H1 (cell line): ENCODE measurements at regions of chr17 and their contacts with region 1.

Region 1: GRCh38 chr17:57861000-57861789 is 11.4 kb upstream of the MRPS23 start:
- DNase-seq: peak in 1 of 2 experiments; percentile 64
- H3K4me3 ChIP-seq: peak overlapping the region; percentile 30 to 66 (median 46)
- H3K27ac ChIP-seq: no peak overlapping the region
- H3K4me1 ChIP-seq: peaks cover 0 to 16% (median 14%) of the 10 kb centered on the region in 4 experiments; a peak in 5 of 7 replicates
- H3K27me3 ChIP-seq: peaks cover 0 to 30% (median 26%) of the 10 kb centered on the region in 4 experiments; a peak in 5 of 7 replicates
- CTCF ChIP-seq: no peak
- EP300 ChIP-seq: no peak
- POLR2A ChIP-seq: no peak
- RAD21 ChIP-seq: no peak

Region 2: GRCh38 chr17:57732062-57732461 is 129.1 kb before region 1 on chr17:
- CTCF ChIA-PET with region 1: no interaction called
- POLR2A ChIA-PET with region 1: no interaction called
- DNase-seq: no peak
- H3K4me3 ChIP-seq: no peak overlapping the region
- H3K27ac ChIP-seq: no peak overlapping the region
- H3K4me1 ChIP-seq: no peaks in the 10 kb centered on the region; a peak in 1 of 7 replicates
- H3K27me3 ChIP-seq: no peaks in the 10 kb centered on the region
- CTCF ChIP-seq: no peak
- EP300 ChIP-seq: no peak
- POLR2A ChIP-seq: no peak
- RAD21 ChIP-seq: no peak

Region 3: DNA sequence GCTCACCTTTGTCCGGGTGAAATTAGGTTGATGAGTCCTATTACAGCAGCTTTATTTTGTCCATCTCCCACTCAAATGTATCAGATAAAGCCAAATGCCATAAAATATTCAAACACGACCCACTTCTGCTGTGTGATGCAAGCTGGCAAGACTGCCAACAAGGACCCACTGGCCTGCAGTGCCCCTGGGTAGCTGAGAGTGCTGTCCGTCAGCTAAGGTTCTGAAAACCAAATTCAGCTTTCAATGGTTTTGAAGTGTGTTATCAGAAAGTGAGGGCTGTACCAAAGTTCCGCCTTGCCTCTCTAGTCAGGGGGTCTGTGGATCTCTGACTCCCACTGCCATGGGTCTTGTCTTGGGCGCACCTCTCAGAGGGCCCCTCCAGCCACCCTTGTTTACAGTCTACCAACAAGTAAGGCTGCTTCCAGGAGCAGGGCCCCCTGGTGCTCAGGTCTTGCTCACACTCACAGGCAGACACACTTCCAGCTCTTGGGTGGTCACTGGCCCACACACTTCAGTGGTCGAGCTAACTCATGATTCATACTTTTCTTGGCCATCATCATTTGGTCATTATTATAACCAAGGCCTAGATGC is 105.6 kb before region 1 on chr17:
- CTCF ChIA-PET with region 1: no interaction called
- POLR2A ChIA-PET with region 1: no interaction called
- DNase-seq: no peak
- H3K4me3 ChIP-seq: no peak overlapping the region
- H3K27ac ChIP-seq: no peak overlapping the region
- H3K4me1 ChIP-seq: peaks cover 0 to 2% (median 0%) of the 10 kb centered on the region in 4 experiments; a peak in 3 of 7 replicates
- H3K27me3 ChIP-seq: no peaks in the 10 kb centered on the region
- CTCF ChIP-seq: no peak
- EP300 ChIP-seq: no peak
- POLR2A ChIP-seq: no peak
- RAD21 ChIP-seq: no peak

Region 4: DNA sequence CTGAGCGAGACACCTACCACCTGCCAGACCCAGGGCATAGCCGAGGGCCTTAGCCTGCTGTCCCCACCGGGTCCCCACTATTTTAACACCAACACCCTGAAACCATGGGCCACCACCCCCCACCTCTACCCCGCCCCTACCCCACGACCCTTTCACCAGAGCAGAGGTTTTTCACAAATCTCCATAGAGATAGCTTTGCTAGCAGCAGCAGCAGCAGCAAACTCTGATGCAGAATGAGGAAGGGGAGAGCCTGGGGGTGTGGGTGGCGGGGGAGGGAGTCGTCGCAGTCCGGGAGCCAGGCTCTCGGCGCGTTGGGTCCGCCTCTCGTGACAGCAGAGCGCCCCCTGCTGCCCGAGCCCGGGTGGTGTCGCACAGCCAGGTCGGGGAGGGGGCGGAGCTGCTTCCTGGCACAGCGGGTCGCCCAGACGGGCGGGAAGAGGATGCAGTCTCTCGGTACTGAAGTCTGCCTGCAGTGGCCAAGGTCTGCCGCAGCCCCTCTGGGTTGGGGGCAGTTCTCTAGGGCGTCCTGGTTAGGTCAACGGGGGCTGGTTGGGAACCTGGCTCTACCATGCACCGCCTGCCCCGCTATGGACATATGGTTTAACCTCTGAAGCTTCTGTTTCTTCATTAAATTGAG is 78.0 kb before region 1 on chr17:
- CTCF ChIA-PET with region 1: no interaction called
- POLR2A ChIA-PET with region 1: no interaction called
- DNase-seq: peak; percentile 70 to 99
- H3K4me3 ChIP-seq: peak overlapping the region in 1 of 4 experiments; percentile 45; a peak in 2 of 8 replicates
- H3K27ac ChIP-seq: no peak overlapping the region
- H3K4me1 ChIP-seq: peaks cover 5 to 12% (median 8%) of the 10 kb centered on the region in 4 experiments; a peak in 6 of 7 replicates
- H3K27me3 ChIP-seq: peaks cover 0 to 13% (median 7%) of the 10 kb centered on the region in 4 experiments; a peak in 6 of 7 replicates
- CTCF ChIP-seq: peak; percentile 88 to 94 (median 94)
- EP300 ChIP-seq: peak; percentile 33 to 63; a peak in 2 of 3 replicates
- POLR2A ChIP-seq: no peak
- RAD21 ChIP-seq: peak; percentile 81 to 83

Region 5: DNA sequence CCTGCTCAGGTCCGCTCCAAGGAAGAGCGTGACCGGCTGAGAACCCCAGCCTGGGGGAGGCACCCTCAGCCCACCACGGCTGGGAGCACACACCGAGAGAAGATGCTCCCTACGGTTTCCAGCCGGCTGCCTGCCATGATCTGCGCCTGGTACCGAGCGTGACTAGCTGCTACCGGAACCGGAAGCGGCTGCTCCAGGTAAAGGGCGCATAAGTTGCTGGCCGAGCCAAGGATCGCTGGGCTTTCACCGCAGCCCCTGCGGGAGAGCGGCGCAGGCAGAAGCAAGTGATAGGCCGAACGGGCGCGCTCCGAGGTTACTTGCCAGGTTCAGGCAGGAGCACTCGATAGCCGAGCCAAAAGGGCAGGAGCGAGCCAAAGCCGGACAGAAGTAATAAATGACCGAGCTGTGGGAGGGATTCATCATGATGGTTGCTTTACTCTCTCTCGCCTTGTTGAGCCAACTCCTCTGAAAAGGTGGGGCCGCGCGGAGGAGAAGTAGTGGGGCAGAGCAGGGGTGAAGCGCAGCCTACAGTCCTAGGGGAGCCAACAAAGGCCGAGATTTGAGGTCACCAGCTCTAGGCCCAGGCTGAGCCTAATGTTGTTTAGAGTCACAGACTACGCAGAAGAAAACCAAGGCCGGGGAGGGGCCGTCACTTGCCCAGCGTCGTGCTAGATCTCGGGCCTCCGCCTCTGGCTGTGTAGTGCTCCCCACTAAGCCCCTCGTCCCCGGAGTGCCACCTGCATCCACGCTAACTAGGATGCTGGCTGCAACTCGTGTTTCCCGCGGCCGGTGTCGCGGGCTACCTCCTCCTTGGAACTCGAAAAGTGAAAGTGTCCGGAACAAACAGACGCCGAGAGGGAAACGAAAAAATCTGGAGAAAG is 11.1 kb before region 1 on chr17 and contains the start of gene MRPS23:
- CTCF ChIA-PET with region 1: interaction called, 117 read pairs
- POLR2A ChIA-PET with region 1: interaction called, 3 read pairs
- DNase-seq: peak; percentile 90 to 96
- H3K4me3 ChIP-seq: peak within 1 kb of the TSS; percentile 89 to 98 (median 94)
- H3K27ac ChIP-seq: peak within 1 kb of the TSS; percentile 63
- H3K4me1 ChIP-seq: peaks cover 0 to 7% (median 3%) of the 10 kb centered on the region in 4 experiments; a peak in 3 of 7 replicates
- H3K27me3 ChIP-seq: no peaks in the 10 kb centered on the region
- CTCF ChIP-seq: no peak
- EP300 ChIP-seq: peak in 1 of 2 experiments; percentile 92; a peak in 1 of 3 replicates
- POLR2A ChIP-seq: peak in 1 of 2 experiments; percentile 68; a peak in 2 of 3 replicates
- RAD21 ChIP-seq: no peak
- total RNA-seq, gene MRPS23: 60.4 and 73.4 TPM in 2 replicates

Region 6: GRCh38 chr17:57892146-57892828 is 31.1 kb after region 1 on chr17:
- CTCF ChIA-PET with region 1: interaction called, 205 read pairs
- POLR2A ChIA-PET with region 1: interaction called, 3 read pairs
- DNase-seq: peak in 1 of 2 experiments; percentile 99
- H3K4me3 ChIP-seq: peak overlapping the region in 1 of 4 experiments; percentile 1; a peak in 1 of 8 replicates
- H3K27ac ChIP-seq: peak overlapping the region; percentile 54; the same call in 1 of the 2 replicates
- H3K4me1 ChIP-seq: peaks cover 8 to 11% (median 11%) of the 10 kb centered on the region in 4 experiments
- H3K27me3 ChIP-seq: no peaks in the 10 kb centered on the region
- CTCF ChIP-seq: peak; percentile 96 to 100 (median 100)
- EP300 ChIP-seq: peak in 1 of 2 experiments; percentile 71; a peak in 1 of 3 replicates
- POLR2A ChIP-seq: no peak
- RAD21 ChIP-seq: peak; percentile 89 to 94

Region 7: GRCh38 chr17:57916925-57917858 is 56.0 kb after region 1 on chr17:
- CTCF ChIA-PET with region 1: interaction called, 22 read pairs
- POLR2A ChIA-PET with region 1: interaction called, 5 read pairs
- DNase-seq: no peak
- H3K4me3 ChIP-seq: no peak overlapping the region
- H3K27ac ChIP-seq: peak overlapping the region; percentile 68; the same call in 1 of the 2 replicates
- H3K4me1 ChIP-seq: peaks cover 5 to 21% (median 14%) of the 10 kb centered on the region in 4 experiments; a peak in 5 of 7 replicates
- H3K27me3 ChIP-seq: no peaks in the 10 kb centered on the region
- CTCF ChIP-seq: peak in 1 of 3 experiments; percentile 2; a peak in 1 of 4 replicates
- EP300 ChIP-seq: no peak
- POLR2A ChIP-seq: no peak
- RAD21 ChIP-seq: peak in 1 of 2 experiments; percentile 20; a peak in 1 of 4 replicates

Region 8: DNA sequence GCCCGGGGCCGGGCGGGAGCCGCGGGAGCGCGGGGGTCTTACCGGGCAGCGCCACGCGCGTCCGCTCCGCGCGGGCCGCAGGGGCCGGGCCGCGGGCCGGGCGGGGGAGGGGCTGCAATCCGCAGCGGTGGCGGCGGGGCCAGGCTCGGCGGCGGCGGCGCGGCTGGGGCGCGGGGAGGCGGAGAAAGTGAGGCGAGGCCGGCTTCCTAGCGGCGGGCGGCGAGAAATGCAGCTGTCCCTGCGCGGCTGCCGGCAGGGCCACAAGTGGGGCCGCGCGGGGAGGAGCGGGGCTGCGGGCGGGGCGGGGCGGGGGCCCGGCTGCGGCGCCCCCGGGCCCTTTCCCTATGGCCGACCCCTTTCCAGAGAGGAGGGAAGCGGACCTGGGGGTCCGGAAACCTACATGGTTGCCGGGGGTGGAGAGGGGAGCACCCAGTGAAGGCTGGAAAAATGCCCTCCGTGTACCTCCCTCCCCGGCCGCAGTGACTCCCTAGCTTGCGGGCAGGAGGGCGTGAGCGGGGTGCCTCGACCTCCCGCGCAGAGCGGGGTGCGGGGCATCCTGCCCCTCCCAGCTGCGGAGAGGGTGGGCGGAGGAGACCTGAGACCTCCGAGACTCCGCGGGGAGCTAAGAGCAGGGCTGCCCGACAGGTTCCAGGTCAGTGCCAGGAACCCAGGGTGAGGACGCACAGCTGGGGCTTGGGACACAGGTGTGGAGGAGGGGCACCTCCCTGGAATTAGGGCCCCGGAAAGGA is 94.2 kb after region 1 on chr17 and contains the start of gene CUEDC1:
- CTCF ChIA-PET with region 1: interaction called, 162 read pairs
- POLR2A ChIA-PET with region 1: interaction called, 15 read pairs
- DNase-seq: peak in 1 of 2 experiments; percentile 82
- H3K4me3 ChIP-seq: peak within 1 kb of the TSS; percentile 32 to 86 (median 66)
- H3K27ac ChIP-seq: no peak within 1 kb of the TSS
- H3K4me1 ChIP-seq: peaks cover 12 to 23% (median 14%) of the 10 kb centered on the region in 4 experiments
- H3K27me3 ChIP-seq: peaks cover 0 to 30% (median 20%) of the 10 kb centered on the region in 4 experiments; a peak in 6 of 7 replicates
- CTCF ChIP-seq: peak; percentile 16 to 63 (median 37)
- EP300 ChIP-seq: no peak
- POLR2A ChIP-seq: no peak
- RAD21 ChIP-seq: peak in 1 of 2 experiments; percentile 23; a peak in 2 of 4 replicates
- total RNA-seq, gene CUEDC1: 7.8 and 10.7 TPM in 2 replicates

Region 9: GRCh38 chr17:57987580-57988421 is 126.6 kb after region 1 on chr17 and contains the start of gene VEZF1:
- CTCF ChIA-PET with region 1: interaction called, 384 read pairs
- POLR2A ChIA-PET with region 1: interaction called, 672 read pairs
- DNase-seq: peak in 1 of 2 experiments; percentile 83
- H3K4me3 ChIP-seq: peak within 1 kb of the TSS; percentile 73 to 95 (median 86)
- H3K27ac ChIP-seq: peak within 1 kb of the TSS; percentile 89
- H3K4me1 ChIP-seq: peaks cover 0 to 2% (median 0%) of the 10 kb centered on the region in 4 experiments; a peak in 3 of 7 replicates
- H3K27me3 ChIP-seq: no peaks in the 10 kb centered on the region
- CTCF ChIP-seq: no peak
- EP300 ChIP-seq: 0 out of 3 replicates have a peak, but pooled peaks of 1 of the 2 experiments have one; percentile 22
- POLR2A ChIP-seq: no peak; a peak in 1 of 3 replicates
- RAD21 ChIP-seq: no peak
- total RNA-seq, gene VEZF1: 56.7 and 61.9 TPM in 2 replicates

Region 10: DNA sequence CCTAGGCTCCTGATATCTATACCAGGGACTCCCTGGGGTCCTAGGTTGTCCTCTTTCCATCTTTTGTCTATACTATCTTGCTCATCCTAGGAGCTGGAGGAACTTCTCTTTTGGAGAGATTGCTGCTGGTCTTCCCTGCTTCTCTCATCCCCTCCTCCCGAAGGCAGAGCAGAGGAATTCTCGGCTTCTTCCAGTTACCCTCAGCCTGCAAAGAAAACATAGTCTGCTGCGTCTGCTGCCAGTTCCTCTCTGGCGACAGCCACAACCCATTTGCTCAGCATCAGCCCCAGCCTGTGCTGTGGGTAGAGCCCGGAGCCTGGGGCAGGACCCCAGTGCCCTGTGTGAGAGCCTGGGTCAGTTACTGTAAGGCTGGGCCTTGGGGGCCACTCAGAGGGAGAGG is 200.5 kb after region 1 on chr17:
- CTCF ChIA-PET with region 1: no interaction called
- POLR2A ChIA-PET with region 1: no interaction called
- DNase-seq: no peak
- H3K4me3 ChIP-seq: no peak overlapping the region
- H3K27ac ChIP-seq: no peak overlapping the region
- H3K4me1 ChIP-seq: peaks cover 0 to 2% (median 0%) of the 10 kb centered on the region in 4 experiments; a peak in 1 of 7 replicates
- H3K27me3 ChIP-seq: no peaks in the 10 kb centered on the region
- CTCF ChIP-seq: no peak
- EP300 ChIP-seq: no peak
- POLR2A ChIP-seq: no peak
- RAD21 ChIP-seq: no peak